ENCODE measurements at regions of chr14 and their contacts with region 1.

Region 1: DNA sequence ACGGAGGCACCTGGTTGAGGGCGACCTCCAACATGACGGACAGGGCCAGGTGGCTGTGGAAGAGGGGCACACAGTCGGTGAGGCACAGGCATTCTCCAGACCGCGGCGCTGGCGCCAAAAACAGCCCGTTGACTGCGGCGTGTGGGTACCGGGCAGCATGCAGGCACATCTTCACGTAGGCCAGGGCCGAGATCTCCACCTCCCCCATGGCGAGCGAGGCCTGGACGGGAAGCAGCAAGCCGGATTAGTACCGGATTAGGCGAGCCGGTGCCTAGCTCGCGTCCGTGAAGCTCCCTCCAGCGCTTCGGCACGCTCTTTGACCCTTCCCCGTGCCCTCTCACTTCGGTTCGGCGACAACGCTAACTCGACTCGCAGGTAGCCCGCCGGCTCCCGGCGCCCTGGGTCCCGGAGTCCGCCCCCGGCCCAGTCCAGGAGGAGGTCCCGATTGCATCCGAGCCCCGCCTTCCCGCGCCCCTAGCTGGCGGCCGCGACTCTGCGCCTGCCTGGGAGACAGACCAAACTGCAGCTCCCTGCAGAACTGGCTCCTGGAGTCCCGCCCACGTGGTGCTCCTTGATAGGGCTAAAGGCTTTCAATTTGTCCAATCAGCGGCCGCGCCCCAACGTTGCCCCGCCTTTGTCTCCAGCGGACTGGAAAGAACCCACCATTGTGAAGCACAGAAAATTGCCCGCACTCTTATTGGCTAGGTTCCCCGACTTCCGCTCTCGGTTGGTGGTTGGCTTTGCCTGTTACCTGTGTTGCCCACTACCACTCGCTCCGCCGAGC is at the start of gene EMC9:
- DNase-seq: peak; percentile 100
- ATAC-seq: peak; percentile 91
- H3K4me3 Mint-ChIP-seq: peak within 1 kb of the TSS; percentile 98
- H3K27ac Mint-ChIP-seq: peak within 1 kb of the TSS; percentile 91
- H3K4me1 Mint-ChIP-seq: peaks cover 74% of the 10 kb centered on the region
- H3K27me3 Mint-ChIP-seq: no peaks in the 10 kb centered on the region
- total RNA-seq, gene EMC9: 45.5 to 56.1 TPM

Region 2: DNA sequence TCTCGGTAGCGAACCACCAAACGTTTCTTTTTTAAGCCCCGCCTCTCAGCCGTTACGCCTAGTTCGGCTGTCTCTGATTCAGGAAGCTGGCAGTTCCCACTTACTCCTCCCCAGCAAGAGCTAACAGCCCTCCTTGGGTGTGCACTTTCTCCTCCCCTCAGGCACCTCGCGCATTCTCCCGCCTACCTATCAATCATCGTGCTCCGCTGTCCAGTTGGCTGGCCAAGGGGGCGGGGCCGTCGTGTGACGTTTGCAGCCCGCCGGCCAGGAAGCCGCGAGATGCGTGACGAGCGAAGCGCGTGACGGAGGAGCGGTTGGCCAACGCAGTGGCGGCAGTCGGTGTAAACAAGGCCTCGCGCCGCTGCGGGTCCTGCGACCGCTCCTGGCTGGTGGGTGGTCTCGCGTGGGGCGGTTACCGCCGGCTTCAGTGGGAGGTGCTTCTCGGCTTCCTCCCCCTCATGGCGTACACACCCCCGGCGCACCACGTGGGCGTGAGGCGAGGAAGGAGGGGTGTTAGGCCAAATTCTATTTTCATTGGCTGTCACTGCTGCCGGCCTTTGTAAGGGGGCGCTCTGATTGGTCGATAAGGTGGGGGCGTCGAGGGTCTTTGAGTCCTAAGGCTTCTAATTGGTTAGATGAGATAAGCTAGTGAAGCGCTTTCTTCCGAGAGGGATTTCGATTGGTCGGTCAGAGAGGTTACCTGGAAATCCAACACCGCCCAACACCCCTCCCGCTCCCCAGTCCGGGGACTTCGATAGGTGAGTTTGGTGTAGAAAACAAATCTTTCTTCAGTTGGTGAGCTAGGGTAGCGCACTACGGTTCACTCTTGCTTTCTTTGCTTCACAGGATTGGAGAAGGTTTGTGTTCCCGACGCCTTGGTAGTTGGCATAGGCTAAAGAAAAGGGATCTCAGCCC is 26.5 kb before region 1 on chr14 and contains the starts of genes DCAF11 and NRL:
- CTCF ChIA-PET with region 1: interaction called, 52 read pairs
- DNase-seq: peak; percentile 100
- ATAC-seq: peak; percentile 91
- H3K4me3 Mint-ChIP-seq: peak within 1 kb of the TSS; percentile 99
- H3K27ac Mint-ChIP-seq: peak within 1 kb of the TSS; percentile 100
- H3K4me1 Mint-ChIP-seq: peaks cover 30% of the 10 kb centered on the region
- H3K27me3 Mint-ChIP-seq: no peaks in the 10 kb centered on the region
- total RNA-seq, gene DCAF11: 86.3 to 94.4 TPM
- total RNA-seq, gene NRL: 2.6 to 3.2 TPM

Region 3: GRCh38 chr14:24224618-24225071 is 83.4 kb after region 1 on chr14:
- CTCF ChIA-PET with region 1: no interaction called
- DNase-seq: no peak
- ATAC-seq: no peak
- H3K4me3 Mint-ChIP-seq: no peak overlapping the region
- H3K27ac Mint-ChIP-seq: no peak overlapping the region
- H3K4me1 Mint-ChIP-seq: peaks cover 24% of the 10 kb centered on the region
- H3K27me3 Mint-ChIP-seq: no peaks in the 10 kb centered on the region